ENCODE measurements at regions of chr6 and their contacts with region 1.

Region 1: GRCh38 chr6:109477725-109478124 is 5.3 kb downstream of the ZBTB24 start:
- DNase-seq: no peak
- ATAC-seq: peak; percentile 77
- H3K4me3 ChIP-seq: peak overlapping the region; percentile 56
- H3K27ac ChIP-seq: peak overlapping the region; percentile 64
- H3K4me1 ChIP-seq: peaks cover 10% of the 10 kb centered on the region
- H3K27me3 ChIP-seq: no peaks in the 10 kb centered on the region
- CTCF ChIP-seq: no peak
- EP300 ChIP-seq: no peak
- POLR2A ChIP-seq: no peak
- RAD21 ChIP-seq: no peak

Region 2: GRCh38 chr6:108760126-108761050 is 717.3 kb before region 1 on chr6:
- CTCF ChIA-PET with region 1: no interaction called
- POLR2A ChIA-PET with region 1: no interaction called
- RAD21 ChIA-PET with region 1: no interaction called
- SMC1A ChIA-PET with region 1: no interaction called
- in situ Hi-C with region 1: no loop called
- intact Hi-C with region 1: no loop called
- DNase-seq: no peak
- ATAC-seq: no peak
- H3K4me3 ChIP-seq: no peak overlapping the region
- H3K27ac ChIP-seq: no peak overlapping the region
- H3K4me1 ChIP-seq: peaks cover 4% of the 10 kb centered on the region
- H3K27me3 ChIP-seq: peaks cover 5 to 7% of the 10 kb centered on the region in 2 experiments
- CTCF ChIP-seq: no peak
- EP300 ChIP-seq: no peak
- POLR2A ChIP-seq: no peak
- RAD21 ChIP-seq: no peak

Region 3: DNA sequence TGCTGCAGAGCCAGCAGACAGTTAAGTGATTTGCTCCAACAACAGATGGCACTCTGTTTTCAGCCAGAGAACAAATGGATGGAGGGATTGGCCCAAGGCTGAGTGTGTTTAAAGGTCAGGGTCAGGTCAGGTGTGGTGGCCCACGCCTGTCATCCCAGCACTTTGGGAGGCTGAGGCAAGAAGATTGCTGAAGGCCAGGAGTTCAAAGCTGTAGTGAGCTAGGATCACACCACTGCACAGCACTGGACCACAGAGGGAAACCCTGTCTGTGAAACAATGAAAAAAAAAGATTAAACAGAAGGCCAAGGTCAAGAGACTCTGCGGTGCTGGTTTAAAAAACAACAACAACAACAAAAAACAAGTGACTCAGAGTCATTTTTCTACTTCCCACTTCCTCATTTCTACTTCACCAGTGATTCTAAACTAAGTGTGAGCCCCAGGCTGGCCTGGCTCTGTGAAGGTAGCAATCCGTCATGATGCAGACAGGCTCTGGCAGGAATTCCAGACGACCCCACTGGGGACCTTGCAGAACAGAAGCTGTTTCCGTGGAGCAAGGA is 672.0 kb before region 1 on chr6:
- CTCF ChIA-PET with region 1: no interaction called
- POLR2A ChIA-PET with region 1: no interaction called
- RAD21 ChIA-PET with region 1: no interaction called
- SMC1A ChIA-PET with region 1: no interaction called
- in situ Hi-C with region 1: no loop called
- intact Hi-C with region 1: no loop called
- DNase-seq: peak; percentile 21
- ATAC-seq: peak; percentile 83
- H3K4me3 ChIP-seq: no peak overlapping the region
- H3K27ac ChIP-seq: no peak overlapping the region
- H3K4me1 ChIP-seq: peaks cover 12% of the 10 kb centered on the region
- H3K27me3 ChIP-seq: no peaks in the 10 kb centered on the region
- CTCF ChIP-seq: no peak
- EP300 ChIP-seq: 0 out of 4 replicates have a peak, but pooled peaks of 1 of the 2 experiments have one; percentile 49
- POLR2A ChIP-seq: no peak
- RAD21 ChIP-seq: no peak

Region 4: DNA sequence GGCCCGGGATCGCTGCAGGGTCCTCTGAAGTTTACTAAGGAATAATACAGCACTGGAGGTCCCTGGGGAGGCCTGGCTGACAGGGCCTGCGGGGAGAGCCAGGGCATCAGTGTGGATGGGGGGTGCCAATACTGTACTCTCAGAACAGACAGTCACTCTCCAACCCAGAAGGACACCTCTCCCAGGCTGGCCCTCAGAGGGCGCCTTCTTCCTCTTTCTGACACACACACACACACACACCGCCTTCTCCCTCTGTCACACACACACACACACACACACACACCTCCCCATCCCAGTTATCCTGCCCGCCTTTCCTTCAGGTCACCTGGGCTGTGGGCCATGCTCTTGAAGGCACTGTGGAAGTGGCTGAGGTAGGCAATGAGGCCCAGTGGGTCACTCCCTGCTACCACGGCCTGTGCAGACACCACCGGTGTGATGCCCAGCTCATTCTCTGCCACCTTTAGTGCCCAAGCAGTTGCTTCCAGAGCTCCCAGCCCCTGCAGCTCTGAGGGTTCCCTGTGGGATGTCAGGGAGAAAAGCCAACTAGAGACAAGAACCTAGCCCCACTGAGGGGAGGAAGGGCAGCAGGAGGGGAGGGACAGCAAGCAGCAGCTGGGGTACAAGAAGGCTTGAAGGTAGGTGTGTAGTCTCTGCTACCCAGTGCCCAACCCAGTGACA is 29.7 kb before region 1 on chr6:
- CTCF ChIA-PET with region 1: interaction called, 21 read pairs
- POLR2A ChIA-PET with region 1: interaction called, 3 read pairs
- RAD21 ChIA-PET with region 1: interaction called, 97 read pairs
- SMC1A ChIA-PET with region 1: interaction called, 148 read pairs
- in situ Hi-C with region 1: no loop called
- intact Hi-C with region 1: no loop called
- DNase-seq: no peak
- ATAC-seq: peak; percentile 47
- H3K4me3 ChIP-seq: no peak overlapping the region
- H3K27ac ChIP-seq: no peak overlapping the region
- H3K4me1 ChIP-seq: peaks cover 9% of the 10 kb centered on the region; the same call in 1 of the 2 replicates
- H3K27me3 ChIP-seq: no peaks in the 10 kb centered on the region
- CTCF ChIP-seq: peak in 2 of 3 experiments; percentile 10 to 18; a peak in 1 of 6 replicates
- EP300 ChIP-seq: no peak
- POLR2A ChIP-seq: peak; percentile 60
- RAD21 ChIP-seq: no peak

Region 5: DNA sequence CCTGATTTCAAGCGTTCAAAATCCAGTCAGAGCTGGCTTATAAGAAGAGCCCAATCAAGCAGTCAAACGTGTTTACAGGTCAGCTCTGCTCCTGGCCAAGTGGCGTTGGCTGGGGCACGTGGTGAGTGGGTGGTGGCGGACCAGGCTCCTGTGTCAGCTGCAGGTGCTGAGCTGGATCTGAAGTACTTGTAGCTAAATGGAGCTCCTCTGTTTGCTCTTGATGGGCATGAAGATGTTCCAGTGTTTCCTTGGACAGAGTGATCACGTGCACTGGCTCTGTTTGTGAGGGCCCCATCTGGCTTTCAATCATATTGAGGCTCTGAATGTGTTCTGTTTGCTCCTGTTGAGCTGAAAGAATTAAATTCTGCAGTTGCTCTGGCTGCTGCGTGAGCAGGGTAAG is 12.0 kb before region 1 on chr6:
- CTCF ChIA-PET with region 1: interaction called, 35 read pairs
- POLR2A ChIA-PET with region 1: interaction called, 132 read pairs
- RAD21 ChIA-PET with region 1: interaction called, 97 read pairs
- SMC1A ChIA-PET with region 1: interaction called, 148 read pairs
- in situ Hi-C with region 1: no loop called
- intact Hi-C with region 1: no loop called
- DNase-seq: no peak
- ATAC-seq: peak; percentile 32; the same call in 1 of the 3 replicates
- H3K4me3 ChIP-seq: no peak overlapping the region
- H3K27ac ChIP-seq: no peak overlapping the region
- H3K4me1 ChIP-seq: no peaks in the 10 kb centered on the region; the same call in none of the 2 replicates
- H3K27me3 ChIP-seq: no peaks in the 10 kb centered on the region
- CTCF ChIP-seq: no peak
- EP300 ChIP-seq: no peak
- POLR2A ChIP-seq: no peak
- RAD21 ChIP-seq: no peak

Region 6: GRCh38 chr6:109491207-109491938 is 13.6 kb after region 1 on chr6:
- CTCF ChIA-PET with region 1: interaction called, 4 read pairs
- POLR2A ChIA-PET with region 1: no interaction called
- RAD21 ChIA-PET with region 1: interaction called, 7 read pairs
- SMC1A ChIA-PET with region 1: interaction called, 12 read pairs
- in situ Hi-C with region 1: no loop called
- intact Hi-C with region 1: no loop called
- DNase-seq: no peak
- ATAC-seq: peak; percentile 89
- H3K4me3 ChIP-seq: no peak overlapping the region
- H3K27ac ChIP-seq: no peak overlapping the region
- H3K4me1 ChIP-seq: no peaks in the 10 kb centered on the region
- H3K27me3 ChIP-seq: no peaks in the 10 kb centered on the region; a peak in 1 of 4 replicates
- CTCF ChIP-seq: no peak
- EP300 ChIP-seq: no peak
- POLR2A ChIP-seq: no peak
- RAD21 ChIP-seq: no peak

Region 7: GRCh38 chr6:110075406-110075805 is 597.7 kb after region 1 on chr6:
- CTCF ChIA-PET with region 1: no interaction called
- POLR2A ChIA-PET with region 1: no interaction called
- RAD21 ChIA-PET with region 1: no interaction called
- SMC1A ChIA-PET with region 1: no interaction called
- in situ Hi-C with region 1: no loop called
- intact Hi-C with region 1: no loop called
- DNase-seq: no peak
- ATAC-seq: no peak
- H3K4me3 ChIP-seq: no peak overlapping the region
- H3K27ac ChIP-seq: no peak overlapping the region
- H3K4me1 ChIP-seq: no peaks in the 10 kb centered on the region
- H3K27me3 ChIP-seq: no peaks in the 10 kb centered on the region
- CTCF ChIP-seq: no peak
- EP300 ChIP-seq: no peak
- POLR2A ChIP-seq: no peak
- RAD21 ChIP-seq: no peak

Measured in GM12878 (cell line).